Activated CD4-positive, alpha-beta memory T cell treated with anti-CD3 and anti-CD28 coated beads, Interleukin-2, amount 10 ng/mL, durations not matched to agents 7 days and 5 days (primary cell): ENCODE measurements at regions of chr11 and their contacts with region 1.

Region 1: GRCh38 chr11:61899146-61899841 is 7.9 kb upstream of the FADS3 start:
- DNase-seq: peak; percentile 91
- H3K4me3 Mint-ChIP-seq: no peak overlapping the region
- H3K27ac Mint-ChIP-seq: no peak overlapping the region
- H3K4me1 Mint-ChIP-seq: peaks cover 4% of the 10 kb centered on the region
- H3K27me3 Mint-ChIP-seq: peaks cover 2% of the 10 kb centered on the region

Region 2: GRCh38 chr11:61871158-61871597 is 28.1 kb before region 1 on chr11:
- CTCF ChIA-PET with region 1: interaction called, 12 read pairs
- POLR2A ChIA-PET with region 1: interaction called, 3 read pairs
- DNase-seq: peak; percentile 71
- H3K4me3 Mint-ChIP-seq: no peak overlapping the region
- H3K27ac Mint-ChIP-seq: no peak overlapping the region
- H3K4me1 Mint-ChIP-seq: peaks cover 5% of the 10 kb centered on the region
- H3K27me3 Mint-ChIP-seq: peaks cover 2% of the 10 kb centered on the region

Region 3: GRCh38 chr11:61885166-61885778 is 14.0 kb before region 1 on chr11:
- CTCF ChIA-PET with region 1: interaction called, 16 read pairs
- POLR2A ChIA-PET with region 1: interaction called, 3 read pairs
- DNase-seq: no peak
- H3K4me3 Mint-ChIP-seq: no peak overlapping the region
- H3K27ac Mint-ChIP-seq: no peak overlapping the region
- H3K4me1 Mint-ChIP-seq: no peaks in the 10 kb centered on the region
- H3K27me3 Mint-ChIP-seq: no peaks in the 10 kb centered on the region

Region 4: GRCh38 chr11:61947486-61948210 is 48.4 kb after region 1 on chr11:
- CTCF ChIA-PET with region 1: interaction called, 85 read pairs
- POLR2A ChIA-PET with region 1: interaction called, 3 read pairs
- DNase-seq: peak; percentile 73
- H3K4me3 Mint-ChIP-seq: no peak overlapping the region
- H3K27ac Mint-ChIP-seq: no peak overlapping the region
- H3K4me1 Mint-ChIP-seq: peaks cover 2% of the 10 kb centered on the region
- H3K27me3 Mint-ChIP-seq: peaks cover 5% of the 10 kb centered on the region